ENCODE measurements at regions of chr18 and their contacts with region 1.

Region 1: DNA sequence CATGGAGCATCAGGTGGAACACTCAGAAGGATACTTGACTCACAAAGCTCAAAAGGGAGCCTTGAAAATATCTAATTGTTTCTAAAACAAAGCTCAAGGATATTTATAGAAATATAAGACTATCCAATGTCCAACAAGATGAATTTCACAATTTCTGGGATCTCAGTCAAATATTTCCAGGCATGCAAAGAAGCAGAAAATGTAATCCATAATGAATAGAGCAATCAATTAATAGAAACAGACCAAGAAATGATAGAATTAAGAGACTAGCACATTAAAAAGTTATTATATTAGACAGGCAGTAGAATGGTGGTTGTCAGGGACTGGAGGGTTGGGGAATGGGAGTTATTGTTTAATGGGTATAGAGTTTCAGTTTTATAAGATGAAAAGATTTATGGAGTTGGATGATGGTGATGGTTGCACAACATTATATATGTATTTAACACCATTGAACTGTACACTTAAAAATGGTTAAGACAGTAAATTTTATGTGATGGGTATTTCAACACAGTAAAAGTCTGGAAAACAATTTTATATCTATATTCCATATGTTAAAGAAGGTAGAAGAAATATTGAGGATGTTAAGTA is 189.9 kb upstream of the PIEZO2 start:
- DNase-seq: no peak
- ATAC-seq: no peak
- H3K4me3 ChIP-seq: no peak overlapping the region
- H3K27ac ChIP-seq: peak overlapping the region; percentile 59
- H3K4me1 ChIP-seq: peaks cover 22% of the 10 kb centered on the region
- H3K27me3 ChIP-seq: no peaks in the 10 kb centered on the region
- CTCF ChIP-seq: no peak

Region 2: GRCh38 chr18:11372163-11372562 is 32.9 kb after region 1 on chr18:
- intact Hi-C with region 1: loop called in 1 of 2 experiments (anchors 5 kb)
- DNase-seq: no peak
- ATAC-seq: no peak
- H3K4me3 ChIP-seq: no peak overlapping the region
- H3K27ac ChIP-seq: no peak overlapping the region
- H3K4me1 ChIP-seq: peaks cover 16% of the 10 kb centered on the region
- H3K27me3 ChIP-seq: no peaks in the 10 kb centered on the region
- CTCF ChIP-seq: no peak